ENCODE measurements at regions of chr17 and their contacts with region 1.

Region 1: GRCh38 chr17:61389670-61390478 is 9.8 kb upstream of the TBX2 start:
- DNase-seq: peak in 1 of 10 donors; percentile 62
- H3K4me3 ChIP-seq: peak overlapping the region in 8 of 59 donors; percentile 7 to 43 (median 26)
- H3K27ac ChIP-seq: peak overlapping the region in 5 of 59 donors; percentile 6 to 46 (median 18)
- H3K27me3 ChIP-seq: no peaks in the 10 kb centered on the region
- CTCF ChIP-seq: peak; percentile 42 to 90 (median 79)

Region 2: GRCh38 chr17:60720763-60721531 is 668.9 kb before region 1 on chr17:
- intact Hi-C with region 1: loop called (anchors 5 kb)
- DNase-seq: peak in 3 of 10 donors; percentile 8 to 22 (median 20)
- H3K4me3 ChIP-seq: no peak overlapping the region
- H3K27ac ChIP-seq: peak overlapping the region in 4 of 59 donors; percentile 21 to 49 (median 34)
- H3K27me3 ChIP-seq: no peaks in the 10 kb centered on the region
- CTCF ChIP-seq: peak; percentile 87 to 98 (median 93)

Region 3: GRCh38 chr17:61002316-61002736 is 387.5 kb before region 1 on chr17:
- intact Hi-C with region 1: loop called (anchors 5 kb)
- DNase-seq: no peak
- H3K4me3 ChIP-seq: no peak overlapping the region
- H3K27ac ChIP-seq: no peak overlapping the region
- H3K27me3 ChIP-seq: no peaks in the 10 kb centered on the region
- CTCF ChIP-seq: peak; percentile 40 to 84 (median 66)

Region 4: GRCh38 chr17:61157246-61157886 is 232.5 kb before region 1 on chr17:
- intact Hi-C with region 1: loop called in 1 of 2 experiments (anchors 10 kb)
- DNase-seq: peak in 5 of 10 donors; percentile 10 to 60 (median 36)
- H3K4me3 ChIP-seq: peak overlapping the region in 56 of 59 donors; percentile 1 to 56 (median 35)
- H3K27ac ChIP-seq: peak overlapping the region in 7 of 59 donors; percentile 2 to 41 (median 19)
- H3K27me3 ChIP-seq: no peaks in the 10 kb centered on the region
- CTCF ChIP-seq: peak in 23 of 56 donors; percentile 4 to 43 (median 25)

Region 5: GRCh38 chr17:61168468-61168867 is 221.4 kb before region 1 on chr17:
- intact Hi-C with region 1: no loop called
- DNase-seq: no peak
- H3K4me3 ChIP-seq: no peak overlapping the region
- H3K27ac ChIP-seq: no peak overlapping the region
- H3K27me3 ChIP-seq: no peaks in the 10 kb centered on the region
- CTCF ChIP-seq: no peak

Region 6: GRCh38 chr17:61217878-61218837 is 171.7 kb before region 1 on chr17:
- intact Hi-C with region 1: loop called in 1 of 2 experiments (anchors 10 kb)
- DNase-seq: no peak
- H3K4me3 ChIP-seq: no peak overlapping the region
- H3K27ac ChIP-seq: peak overlapping the region in 3 of 59 donors; percentile 1 to 54 (median 9)
- H3K27me3 ChIP-seq: no peaks in the 10 kb centered on the region
- CTCF ChIP-seq: no peak

Region 7: DNA sequence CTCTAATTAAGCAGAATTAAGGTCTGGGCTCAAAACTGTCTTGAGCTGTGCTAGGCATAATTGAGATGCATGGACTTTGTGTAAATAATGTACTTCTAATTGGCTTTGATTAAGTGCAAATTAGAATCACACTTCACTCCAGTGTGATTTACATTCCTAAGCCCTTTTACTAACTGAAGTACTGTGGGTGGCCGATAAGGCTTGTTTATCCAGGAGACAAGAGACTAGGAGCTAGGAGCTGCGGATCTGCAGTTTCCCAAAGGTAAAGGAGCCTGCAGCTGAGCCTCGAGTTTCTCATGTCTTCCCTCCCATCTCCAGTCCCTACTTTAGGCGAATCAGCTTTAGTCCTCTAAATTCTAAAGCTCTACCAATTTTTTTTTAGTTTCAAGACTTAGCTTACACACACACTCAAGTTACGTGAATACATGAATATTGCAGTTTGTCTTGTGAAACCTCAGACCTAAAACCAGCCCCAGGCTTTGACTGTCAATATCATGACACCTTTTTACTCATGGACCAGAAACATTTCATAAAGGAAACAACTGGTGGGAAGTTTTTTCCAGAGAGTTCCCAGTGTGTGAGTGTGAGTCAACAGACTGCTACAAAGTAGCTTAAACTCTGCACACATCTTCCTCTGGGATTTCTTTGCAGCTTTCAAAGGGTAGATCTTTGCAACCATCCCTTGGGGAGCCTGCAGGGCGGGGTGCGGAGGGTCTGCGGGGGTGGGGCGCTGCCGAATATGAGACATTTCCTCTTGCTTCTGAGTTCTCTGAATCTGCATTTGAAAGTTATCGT is 104.2 kb before region 1 on chr17:
- intact Hi-C with region 1: no loop called
- DNase-seq: no peak
- H3K4me3 ChIP-seq: no peak overlapping the region
- H3K27ac ChIP-seq: peak overlapping the region in 9 of 59 donors; percentile 1 to 53 (median 22)
- H3K27me3 ChIP-seq: no peaks in the 10 kb centered on the region
- CTCF ChIP-seq: no peak

Measured in dorsolateral prefrontal cortex (tissue), 120 donors.